Activated CD8-positive, alpha-beta T cell treated with anti-CD3 and anti-CD28 coated beads for 36 hours (primary cell): ENCODE measurements at regions of chr7 and their contacts with region 1.

Region 1: DNA sequence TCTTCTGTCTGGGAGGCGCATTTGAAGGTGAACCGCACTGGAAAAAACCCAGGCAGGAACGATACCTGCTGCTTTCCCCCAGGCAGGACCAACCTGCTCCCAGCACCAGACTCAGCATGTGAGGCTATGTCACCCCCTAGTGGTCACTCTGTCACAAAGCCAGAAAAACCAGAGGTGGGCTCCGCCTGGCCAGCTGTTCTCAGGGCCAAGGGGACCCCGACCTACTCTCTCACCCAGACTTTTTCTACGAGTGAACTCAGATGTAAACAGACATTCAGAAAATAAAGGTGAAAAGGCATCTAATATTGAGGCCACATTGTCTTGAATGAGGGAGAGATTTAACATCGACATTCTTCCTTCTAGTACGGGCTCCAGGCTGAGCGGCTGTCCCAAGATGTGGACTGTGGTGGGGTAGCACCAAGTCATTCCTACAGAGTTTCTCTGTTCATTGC is 117.3 kb downstream of the PRKAG2 start:
- DNase-seq: peak; percentile 66
- ATAC-seq: peak; percentile 55
- H3K4me3 Mint-ChIP-seq: no peak overlapping the region
- H3K27ac Mint-ChIP-seq: no peak overlapping the region
- H3K4me1 Mint-ChIP-seq: peaks cover 24% of the 10 kb centered on the region
- H3K27me3 Mint-ChIP-seq: no peaks in the 10 kb centered on the region
- CTCF ChIP-seq: peak; percentile 97

Region 2: DNA sequence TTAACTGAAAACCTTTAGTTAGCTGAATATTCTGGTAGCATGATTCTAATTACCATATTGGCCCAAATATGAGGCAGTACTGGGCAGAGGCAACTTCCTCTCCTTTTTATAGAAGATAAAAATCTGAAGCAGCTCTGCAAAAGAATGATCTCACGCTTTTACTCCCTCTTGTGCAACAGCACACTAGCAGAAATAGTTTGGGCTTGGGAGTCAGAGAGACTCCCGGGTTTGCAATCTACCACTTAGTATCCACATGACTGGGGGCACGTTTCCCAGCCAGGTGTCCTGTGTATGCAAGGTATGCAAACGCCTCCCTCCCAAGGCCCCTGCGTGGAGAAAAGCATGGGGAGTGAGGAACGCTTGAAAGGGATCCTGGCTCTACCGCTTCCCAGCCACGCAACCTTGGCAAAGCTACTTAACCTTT is 192.7 kb before region 1 on chr7:
- CTCF ChIA-PET with region 1: interaction called, 8 read pairs
- POLR2A ChIA-PET with region 1: no interaction called
- intact Hi-C with region 1: loop called (anchors 5 kb)
- DNase-seq: no peak
- ATAC-seq: no peak
- H3K4me3 Mint-ChIP-seq: no peak overlapping the region
- H3K27ac Mint-ChIP-seq: no peak overlapping the region
- H3K4me1 Mint-ChIP-seq: no peaks in the 10 kb centered on the region
- H3K27me3 Mint-ChIP-seq: no peaks in the 10 kb centered on the region
- CTCF ChIP-seq: no peak

Region 3: DNA sequence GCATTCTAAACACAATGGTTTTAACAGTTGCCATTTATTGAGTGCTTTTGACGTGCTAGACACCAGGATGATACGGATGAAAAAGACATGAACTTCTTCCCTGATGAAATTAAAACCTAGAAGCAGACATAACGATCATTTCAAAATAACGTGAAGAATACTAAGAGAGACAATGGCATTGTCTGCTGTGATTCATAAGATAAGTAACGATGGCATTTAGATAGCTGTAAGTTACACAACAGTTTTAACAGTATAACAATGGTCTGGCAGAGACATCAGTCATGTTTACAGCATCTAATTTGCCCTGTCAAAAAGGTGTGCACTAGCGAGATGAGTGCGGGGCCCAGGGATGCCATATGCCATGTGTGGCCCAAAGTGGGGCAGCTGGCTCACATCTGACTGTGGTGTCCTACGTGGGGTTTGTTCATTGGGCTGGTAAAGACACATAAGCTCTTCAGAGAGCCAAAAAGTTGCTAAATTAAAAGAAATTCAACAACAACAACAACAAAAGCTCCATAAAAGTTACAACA is 184.2 kb before region 1 on chr7:
- CTCF ChIA-PET with region 1: interaction called, 23 read pairs
- POLR2A ChIA-PET with region 1: no interaction called
- intact Hi-C with region 1: no loop called
- DNase-seq: no peak
- ATAC-seq: no peak
- H3K4me3 Mint-ChIP-seq: no peak overlapping the region
- H3K27ac Mint-ChIP-seq: no peak overlapping the region
- H3K4me1 Mint-ChIP-seq: no peaks in the 10 kb centered on the region
- H3K27me3 Mint-ChIP-seq: no peaks in the 10 kb centered on the region
- CTCF ChIP-seq: no peak

Region 4: GRCh38 chr7:151626422-151627115 is 133.0 kb before region 1 on chr7:
- CTCF ChIA-PET with region 1: interaction called, 80 read pairs
- POLR2A ChIA-PET with region 1: interaction called, 8 read pairs
- intact Hi-C with region 1: no loop called
- DNase-seq: peak; percentile 56
- ATAC-seq: peak; percentile 60
- H3K4me3 Mint-ChIP-seq: no peak overlapping the region
- H3K27ac Mint-ChIP-seq: no peak overlapping the region
- H3K4me1 Mint-ChIP-seq: peaks cover 45% of the 10 kb centered on the region
- H3K27me3 Mint-ChIP-seq: no peaks in the 10 kb centered on the region
- CTCF ChIP-seq: peak; percentile 42

Region 5: DNA sequence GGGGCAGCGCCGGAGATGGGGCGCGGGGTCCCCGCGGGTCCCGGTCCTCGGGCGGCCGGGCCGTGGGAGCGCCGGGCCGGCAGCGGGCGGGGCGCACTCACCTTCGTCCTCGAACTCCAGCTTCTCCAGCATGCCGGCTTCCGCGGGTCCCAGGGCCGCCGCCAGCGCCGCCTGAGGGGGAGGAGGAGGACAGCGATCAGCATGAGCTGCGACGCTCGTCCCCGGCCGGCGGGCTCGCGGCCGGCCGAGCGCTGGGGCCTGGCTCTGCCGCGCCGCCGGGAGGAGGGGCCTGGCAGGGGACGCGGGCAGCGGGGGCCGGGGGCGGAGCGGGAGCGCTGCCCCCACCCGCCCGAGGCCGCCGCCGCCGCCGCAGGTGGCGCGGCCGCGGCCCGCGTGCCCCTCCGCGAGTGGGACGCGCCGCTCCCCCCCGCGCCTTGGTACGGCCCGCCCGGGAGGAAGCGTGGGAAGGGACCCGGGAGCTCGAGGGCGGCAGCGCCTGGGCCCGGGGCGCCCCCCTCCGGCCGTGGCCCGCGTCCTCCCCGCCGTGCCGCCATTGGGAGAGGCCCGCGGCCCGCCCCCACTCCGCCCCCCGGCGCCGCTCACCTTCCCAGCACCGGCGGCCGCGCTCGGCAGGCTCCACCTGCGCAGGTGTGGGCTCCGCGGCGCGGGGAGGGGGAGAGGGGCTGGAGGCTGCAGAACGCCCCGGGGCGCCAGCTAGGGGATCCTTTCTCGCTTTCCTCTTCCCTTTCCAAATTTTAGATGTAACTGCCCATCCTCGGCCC is 127.5 kb before region 1 on chr7:
- CTCF ChIA-PET with region 1: interaction called, 80 read pairs
- POLR2A ChIA-PET with region 1: interaction called, 8 read pairs
- intact Hi-C with region 1: no loop called
- DNase-seq: peak; percentile 84
- ATAC-seq: peak; percentile 80
- H3K4me3 Mint-ChIP-seq: peak overlapping the region; percentile 88
- H3K27ac Mint-ChIP-seq: peak overlapping the region; percentile 95
- H3K4me1 Mint-ChIP-seq: peaks cover 27% of the 10 kb centered on the region
- H3K27me3 Mint-ChIP-seq: no peaks in the 10 kb centered on the region
- CTCF ChIP-seq: peak; percentile 23

Region 6: DNA sequence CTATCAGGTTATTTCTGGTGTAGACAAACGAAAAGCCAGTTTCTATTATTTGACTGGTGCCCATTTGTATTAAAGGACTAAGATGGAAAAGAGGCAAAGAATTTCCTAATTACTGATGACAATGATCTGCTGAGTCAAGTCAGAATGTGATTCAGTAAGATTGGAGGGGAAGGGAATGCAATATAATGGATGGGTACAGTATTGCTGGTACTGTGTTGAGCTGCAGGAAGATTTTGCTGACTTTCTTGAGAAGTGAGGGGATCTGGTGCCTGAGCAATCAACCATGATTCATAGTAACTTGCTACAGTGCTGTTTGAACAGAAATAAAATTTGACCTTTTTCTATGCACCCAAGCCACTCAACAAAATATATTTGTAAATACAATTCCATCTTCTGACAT is 100.8 kb before region 1 on chr7:
- CTCF ChIA-PET with region 1: no interaction called
- POLR2A ChIA-PET with region 1: no interaction called
- intact Hi-C with region 1: no loop called
- DNase-seq: no peak
- ATAC-seq: no peak
- H3K4me3 Mint-ChIP-seq: no peak overlapping the region
- H3K27ac Mint-ChIP-seq: no peak overlapping the region
- H3K4me1 Mint-ChIP-seq: no peaks in the 10 kb centered on the region
- H3K27me3 Mint-ChIP-seq: no peaks in the 10 kb centered on the region
- CTCF ChIP-seq: no peak

Region 7: GRCh38 chr7:151776876-151777494 is 17.4 kb after region 1 on chr7:
- CTCF ChIA-PET with region 1: interaction called, 87 read pairs
- POLR2A ChIA-PET with region 1: no interaction called
- intact Hi-C with region 1: no loop called
- DNase-seq: no peak
- ATAC-seq: no peak
- H3K4me3 Mint-ChIP-seq: no peak overlapping the region
- H3K27ac Mint-ChIP-seq: no peak overlapping the region
- H3K4me1 Mint-ChIP-seq: no peaks in the 10 kb centered on the region
- H3K27me3 Mint-ChIP-seq: no peaks in the 10 kb centered on the region
- CTCF ChIP-seq: no peak